ENCODE measurements at regions of chr2 and their contacts with region 1.

Region 1: DNA sequence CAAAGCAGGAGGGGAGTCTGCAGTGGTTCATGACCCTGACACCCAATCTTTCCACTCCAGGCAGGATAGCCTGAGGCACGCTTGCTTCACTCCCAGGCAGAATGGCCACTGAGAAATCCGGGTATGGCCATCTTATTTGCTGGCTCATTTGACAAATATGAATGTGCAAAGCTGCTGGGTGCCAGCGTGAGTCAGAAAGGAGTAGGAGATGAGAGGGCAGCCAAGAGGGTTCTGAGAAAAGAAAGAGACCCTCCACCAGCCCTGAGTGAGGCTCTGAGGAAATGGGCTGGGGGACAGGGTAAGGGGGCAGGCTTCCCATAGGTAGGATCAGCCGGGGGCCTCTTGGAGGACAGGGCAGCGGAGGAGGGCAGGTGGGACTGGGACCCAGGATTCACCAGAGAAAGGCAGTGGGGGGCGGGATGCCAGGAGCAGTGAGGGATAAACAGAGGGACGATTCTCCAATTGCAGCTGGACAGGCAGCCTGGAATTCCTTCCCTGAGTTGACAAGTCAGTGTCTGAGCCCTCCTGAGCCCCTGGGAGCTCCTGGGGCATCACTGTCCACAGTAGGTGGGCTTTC is 15.2 kb downstream of the RAMP1 start:
- DNase-seq: no peak
- ATAC-seq: no peak
- H3K4me3 ChIP-seq: no peak overlapping the region
- H3K27ac ChIP-seq: peak overlapping the region in 2 of 10 donors; percentile 10 to 27
- H3K4me1 ChIP-seq: peaks cover 0 to 79% (median 59%) of the 10 kb centered on the region in 9 donors
- H3K27me3 ChIP-seq: no peaks in the 10 kb centered on the region
- CTCF ChIP-seq: no peak

Region 2: GRCh38 chr2:237744613-237745249 is 129.9 kb before region 1 on chr2:
- intact Hi-C with region 1: no loop called
- DNase-seq: peak; percentile 74 to 84
- ATAC-seq: peak; percentile 76 to 92 (median 84)
- H3K4me3 ChIP-seq: no peak overlapping the region
- H3K27ac ChIP-seq: peak overlapping the region in 5 of 10 donors; percentile 2 to 58 (median 41)
- H3K4me1 ChIP-seq: peaks cover 11 to 61% (median 54%) of the 10 kb centered on the region in 9 donors
- H3K27me3 ChIP-seq: no peaks in the 10 kb centered on the region
- CTCF ChIP-seq: peak; percentile 97 to 99 (median 99)

Region 3: DNA sequence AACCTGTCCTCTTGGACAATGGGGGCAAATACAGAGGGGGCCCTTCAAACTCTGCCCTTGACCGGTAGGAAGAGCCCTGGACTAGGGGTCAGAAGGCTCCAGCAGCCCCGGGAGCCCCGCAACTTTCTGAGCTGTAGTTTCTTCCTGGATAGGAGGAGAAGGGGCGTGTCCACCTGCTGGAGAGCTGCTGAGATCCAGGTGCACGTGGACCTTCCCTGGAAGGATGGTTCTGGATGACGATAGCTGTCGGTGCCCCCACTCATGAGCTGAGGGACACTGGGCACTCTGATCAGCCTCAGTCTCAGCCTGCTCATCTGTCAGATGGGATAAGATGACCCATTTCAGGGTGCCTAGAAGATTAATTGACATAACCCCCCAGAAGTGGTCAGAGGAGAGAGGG is 1651.3 kb after region 1 on chr2:
- intact Hi-C with region 1: loop called in 1 of 10 experiments (anchors 5 kb)
- DNase-seq: no peak
- ATAC-seq: no peak
- H3K4me3 ChIP-seq: no peak overlapping the region
- H3K27ac ChIP-seq: no peak overlapping the region
- H3K4me1 ChIP-seq: peaks cover 0 to 9% (median 4%) of the 10 kb centered on the region in 9 donors
- H3K27me3 ChIP-seq: peaks cover 0 to 7% (median 4%) of the 10 kb centered on the region in 7 donors
- CTCF ChIP-seq: no peak

Measured in heart right ventricle (tissue), 16 donors.